ENCODE measurements at regions of chr11 and their contacts with region 1.

Region 1: GRCh38 chr11:69670158-69670845 is 4.9 kb downstream of the LTO1 start:
- DNase-seq: peak; percentile 68

Region 2: DNA sequence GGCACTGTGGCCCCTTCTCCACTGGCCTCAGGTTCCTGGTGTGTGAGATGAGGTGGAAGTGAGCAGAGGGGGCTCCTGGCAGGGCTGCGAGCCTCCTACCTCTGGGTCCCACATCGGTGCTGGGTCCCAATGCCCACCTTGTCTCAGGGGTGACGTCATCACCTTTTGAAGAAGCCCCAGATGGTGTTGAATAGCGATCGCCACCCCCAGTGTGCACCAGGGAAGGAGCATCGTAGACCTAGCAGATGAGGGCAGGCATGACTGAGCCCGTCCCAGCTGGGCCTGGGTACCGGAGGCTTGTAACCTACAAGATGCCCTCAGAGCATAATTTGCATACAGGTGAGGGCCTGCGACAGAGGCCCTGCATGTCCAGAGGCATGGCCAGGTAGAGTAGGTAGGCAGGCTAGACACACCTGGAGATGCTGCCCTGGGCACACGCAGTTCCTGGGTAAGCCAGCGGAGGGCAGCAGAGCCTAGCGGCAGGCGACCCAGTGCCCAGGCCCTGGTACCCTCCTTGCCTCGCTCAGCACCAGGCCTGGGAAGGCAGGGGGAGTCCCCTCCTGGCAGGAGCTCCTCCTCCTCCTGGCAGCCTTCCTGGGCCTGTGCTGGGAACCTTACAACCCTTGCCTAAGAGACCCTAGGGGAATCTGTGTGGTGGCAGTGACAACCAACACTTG is 569.0 kb before region 1 on chr11:
- in situ Hi-C with region 1: loop called (anchors 25 kb)
- DNase-seq: peak; percentile 73

Region 3: GRCh38 chr11:69362316-69362715 is 308.0 kb before region 1 on chr11:
- in situ Hi-C with region 1: no loop called
- DNase-seq: no peak

Measured in ACHN (cell line).